ENCODE measurements at regions of chr17 and their contacts with region 1.

Region 1: GRCh38 chr17:45852535-45853297 is 8.0 kb downstream of the SPPL2C start:
- DNase-seq: peak; percentile 65
- ATAC-seq: no peak
- H3K4me3 ChIP-seq: no peak overlapping the region
- H3K4me3 Mint-ChIP-seq: no peak overlapping the region
- H3K27ac ChIP-seq: no peak overlapping the region
- H3K27ac Mint-ChIP-seq: no peak overlapping the region
- H3K4me1 ChIP-seq: peaks cover 0 to 2% of the 10 kb centered on the region in 2 donors
- H3K4me1 Mint-ChIP-seq: no peaks in the 10 kb centered on the region
- H3K27me3 ChIP-seq: peaks cover 0 to 21% (median 3%) of the 10 kb centered on the region in 4 experiments
- H3K27me3 Mint-ChIP-seq: peaks cover 32% of the 10 kb centered on the region
- CTCF ChIP-seq: peak; percentile 90

Region 2: DNA sequence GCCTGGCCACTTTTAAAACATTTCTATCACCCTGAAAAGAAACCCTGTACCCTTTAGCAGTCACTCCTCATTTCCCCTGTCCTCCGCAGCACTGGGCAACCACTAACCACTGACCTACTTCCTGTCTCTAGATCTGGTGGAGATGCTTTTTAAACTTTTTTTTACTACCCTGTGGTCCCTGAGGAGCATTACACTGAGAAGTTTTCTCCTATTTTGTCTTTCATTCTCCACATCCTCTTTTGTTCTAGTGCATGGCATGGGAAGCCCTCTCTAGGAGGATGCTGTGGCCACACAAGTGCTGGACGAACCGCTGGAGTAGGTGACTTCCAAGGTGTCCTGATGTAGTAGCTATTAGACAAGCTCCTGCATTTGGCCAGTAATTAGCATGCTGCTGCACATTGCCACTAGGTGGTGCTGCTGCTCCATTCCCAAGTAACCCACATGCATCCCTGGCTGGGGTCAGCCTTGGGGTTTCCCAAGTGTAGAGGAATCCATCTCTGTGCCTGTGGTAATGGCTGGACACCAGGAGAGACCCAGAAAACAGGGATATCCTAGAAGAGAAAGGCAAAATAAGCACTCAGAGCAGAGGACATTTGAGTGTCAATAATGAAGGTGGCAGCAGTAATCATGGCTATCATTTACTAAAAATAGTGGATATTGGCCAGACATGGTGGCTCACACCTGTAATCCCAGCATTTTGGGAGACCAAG is 212.4 kb before region 1 on chr17:
- CTCF ChIA-PET with region 1: interaction called, 6 read pairs
- POLR2A ChIA-PET with region 1: no interaction called
- intact Hi-C with region 1: loop called (anchors 1 kb)
- DNase-seq: peak; percentile 76
- ATAC-seq: peak; percentile 62
- H3K4me3 ChIP-seq: no peak overlapping the region
- H3K4me3 Mint-ChIP-seq: no peak overlapping the region
- H3K27ac ChIP-seq: no peak overlapping the region
- H3K27ac Mint-ChIP-seq: peak overlapping the region; percentile 26
- H3K4me1 ChIP-seq: no peaks in the 10 kb centered on the region
- H3K4me1 Mint-ChIP-seq: no peaks in the 10 kb centered on the region
- H3K27me3 ChIP-seq: no peaks in the 10 kb centered on the region
- H3K27me3 Mint-ChIP-seq: no peaks in the 10 kb centered on the region
- CTCF ChIP-seq: peak; percentile 99

Region 3: DNA sequence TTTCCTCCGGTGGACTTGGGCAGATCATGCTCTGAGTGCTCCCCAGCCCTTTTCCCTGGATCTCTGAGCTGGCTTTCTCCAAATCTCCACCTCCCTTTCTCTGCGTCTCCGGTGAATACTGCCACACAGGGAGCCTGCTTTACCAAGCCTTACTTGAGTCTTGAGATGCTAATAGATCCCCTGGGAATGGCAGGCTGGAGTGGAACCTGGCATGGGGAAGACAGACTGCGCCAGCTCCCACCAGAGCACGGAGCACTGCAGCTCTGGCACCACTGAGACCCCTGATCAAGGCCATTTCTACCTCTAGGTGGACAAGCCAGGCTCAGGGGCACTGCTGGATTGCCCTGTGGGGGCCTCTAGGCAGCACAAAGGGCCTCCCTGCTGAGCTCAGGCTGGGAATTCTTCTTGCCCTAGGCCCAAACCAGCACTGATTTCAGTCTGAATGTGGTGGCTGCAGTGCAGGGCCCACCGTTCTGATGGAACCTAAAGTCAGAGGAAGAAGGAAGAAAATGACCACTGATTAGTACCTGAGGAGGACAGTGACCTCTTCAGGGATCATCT is 142.9 kb before region 1 on chr17:
- CTCF ChIA-PET with region 1: no interaction called
- POLR2A ChIA-PET with region 1: no interaction called
- intact Hi-C with region 1: no loop called
- DNase-seq: no peak
- ATAC-seq: no peak
- H3K4me3 ChIP-seq: no peak overlapping the region
- H3K4me3 Mint-ChIP-seq: no peak overlapping the region
- H3K27ac ChIP-seq: no peak overlapping the region
- H3K27ac Mint-ChIP-seq: no peak overlapping the region
- H3K4me1 ChIP-seq: no peaks in the 10 kb centered on the region
- H3K4me1 Mint-ChIP-seq: no peaks in the 10 kb centered on the region
- H3K27me3 ChIP-seq: peaks cover 0 to 32% (median 2%) of the 10 kb centered on the region in 4 experiments
- H3K27me3 Mint-ChIP-seq: peaks cover 60% of the 10 kb centered on the region
- CTCF ChIP-seq: no peak

Region 4: DNA sequence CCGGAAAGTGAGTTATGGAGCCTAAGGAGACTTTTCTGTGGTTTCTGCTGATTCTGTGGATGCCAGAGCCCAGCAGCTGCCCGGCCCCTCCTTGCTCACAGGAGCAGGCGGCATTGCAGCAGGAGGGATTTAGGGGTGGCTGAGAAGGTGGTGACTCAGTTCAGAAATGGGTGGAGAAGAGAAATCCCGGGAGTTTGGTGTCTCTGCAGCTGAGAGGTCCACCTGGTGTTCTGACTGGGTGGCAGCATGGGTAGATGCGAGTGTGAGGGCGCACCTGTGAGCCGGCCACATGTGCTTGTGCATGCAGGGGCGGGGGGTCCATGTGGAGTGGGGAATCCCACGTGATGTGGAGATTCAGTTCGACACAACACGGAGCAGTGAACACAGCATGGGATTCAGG is 24.1 kb before region 1 on chr17:
- CTCF ChIA-PET with region 1: interaction called, 18 read pairs
- POLR2A ChIA-PET with region 1: no interaction called
- intact Hi-C with region 1: no loop called
- DNase-seq: no peak
- ATAC-seq: no peak
- H3K4me3 ChIP-seq: no peak overlapping the region
- H3K4me3 Mint-ChIP-seq: no peak overlapping the region
- H3K27ac ChIP-seq: no peak overlapping the region
- H3K27ac Mint-ChIP-seq: no peak overlapping the region
- H3K4me1 ChIP-seq: no peaks in the 10 kb centered on the region
- H3K4me1 Mint-ChIP-seq: no peaks in the 10 kb centered on the region
- H3K27me3 ChIP-seq: peaks cover 0 to 9% (median 0%) of the 10 kb centered on the region in 4 experiments
- H3K27me3 Mint-ChIP-seq: peaks cover 7% of the 10 kb centered on the region
- CTCF ChIP-seq: no peak

Region 5: DNA sequence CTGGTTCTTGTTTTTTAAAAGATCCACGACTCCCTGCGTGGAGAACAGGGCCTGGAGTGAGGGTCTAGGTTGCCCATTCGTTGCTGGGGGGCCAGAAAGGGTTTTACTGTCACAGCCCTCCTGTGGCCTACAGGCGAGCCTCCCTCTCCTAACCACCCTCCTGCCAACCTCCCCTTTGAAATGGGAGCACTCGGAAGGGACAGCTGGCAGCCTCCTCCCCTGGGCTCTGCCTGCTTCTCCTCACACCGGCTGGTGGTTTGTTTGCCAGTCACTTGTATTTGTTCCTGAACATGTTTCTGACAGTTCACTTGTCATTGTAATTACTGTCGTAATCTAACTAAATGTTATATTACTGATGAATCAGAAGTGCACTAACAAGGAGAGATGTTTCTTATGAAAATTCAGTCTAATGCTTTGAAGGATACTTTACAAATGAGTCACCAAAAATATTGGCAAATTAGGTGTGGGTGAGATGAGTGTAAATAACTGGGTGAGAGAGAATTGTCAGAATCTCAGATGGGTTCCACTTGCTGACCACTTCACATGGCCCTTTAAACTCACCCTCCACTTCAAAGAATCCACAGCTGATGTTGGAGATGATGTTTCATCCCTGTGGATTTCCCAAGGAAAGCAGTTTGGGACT is 10.7 kb before region 1 on chr17:
- CTCF ChIA-PET with region 1: interaction called, 10 read pairs
- POLR2A ChIA-PET with region 1: no interaction called
- intact Hi-C with region 1: no loop called
- DNase-seq: no peak
- ATAC-seq: no peak
- H3K4me3 ChIP-seq: no peak overlapping the region
- H3K4me3 Mint-ChIP-seq: no peak overlapping the region
- H3K27ac ChIP-seq: no peak overlapping the region
- H3K27ac Mint-ChIP-seq: no peak overlapping the region
- H3K4me1 ChIP-seq: no peaks in the 10 kb centered on the region
- H3K4me1 Mint-ChIP-seq: no peaks in the 10 kb centered on the region
- H3K27me3 ChIP-seq: peaks cover 0 to 3% (median 0%) of the 10 kb centered on the region in 4 experiments
- H3K27me3 Mint-ChIP-seq: peaks cover 6% of the 10 kb centered on the region
- CTCF ChIP-seq: no peak